ENCODE measurements at regions of chr3 and their contacts with region 1.

Region 1: GRCh38 chr3:98602078-98602678 is 8.8 kb upstream of the CPOX start:
- DNase-seq: peak; percentile 53
- ATAC-seq: peak; percentile 87
- H3K4me3 ChIP-seq: no peak overlapping the region
- H3K27ac ChIP-seq: no peak overlapping the region
- H3K4me1 ChIP-seq: peaks cover 42% of the 10 kb centered on the region
- H3K27me3 ChIP-seq: no peaks in the 10 kb centered on the region
- CTCF ChIP-seq: peak; percentile 83
- EP300 ChIP-seq: no peak
- POLR2A ChIP-seq: no peak
- RAD21 ChIP-seq: peak; percentile 68

Region 2: GRCh38 chr3:98563661-98564281 is 38.4 kb before region 1 on chr3:
- CTCF ChIA-PET with region 1: no interaction called
- POLR2A ChIA-PET with region 1: no interaction called
- in situ Hi-C with region 1: no loop called
- intact Hi-C with region 1: no loop called
- DNase-seq: no peak
- ATAC-seq: no peak
- H3K4me3 ChIP-seq: no peak overlapping the region
- H3K27ac ChIP-seq: no peak overlapping the region
- H3K4me1 ChIP-seq: no peaks in the 10 kb centered on the region
- H3K27me3 ChIP-seq: no peaks in the 10 kb centered on the region; a peak in 1 of 5 replicates
- CTCF ChIP-seq: no peak
- EP300 ChIP-seq: no peak
- POLR2A ChIP-seq: no peak
- RAD21 ChIP-seq: no peak

Region 3: DNA sequence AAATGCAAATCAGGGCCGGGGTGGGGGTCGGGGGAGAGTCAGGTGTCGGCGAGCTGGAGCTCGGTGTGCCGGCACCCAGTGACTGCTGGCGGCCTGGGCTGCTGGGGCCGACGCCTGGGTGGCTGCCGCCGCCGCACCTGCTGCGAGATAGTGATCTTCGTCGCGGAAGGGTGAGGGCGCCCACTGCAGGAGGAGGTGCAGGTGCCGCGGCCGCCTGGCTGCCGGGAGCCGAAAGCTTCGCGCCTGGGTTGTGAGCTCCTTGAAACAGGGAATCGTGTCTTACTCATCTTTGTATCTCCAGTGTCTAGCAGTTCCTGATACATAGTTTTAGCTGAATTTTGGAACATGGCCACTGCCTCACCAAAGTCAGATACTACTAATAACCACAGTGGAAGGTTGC is 55.3 kb after region 1 on chr3:
- CTCF ChIA-PET with region 1: no interaction called
- POLR2A ChIA-PET with region 1: no interaction called
- in situ Hi-C with region 1: no loop called
- intact Hi-C with region 1: loop called (anchors 1 kb)
- DNase-seq: no peak
- ATAC-seq: peak; percentile 93
- H3K4me3 ChIP-seq: no peak overlapping the region
- H3K27ac ChIP-seq: no peak overlapping the region
- H3K4me1 ChIP-seq: no peaks in the 10 kb centered on the region
- H3K27me3 ChIP-seq: peaks cover 0 to 8% of the 10 kb centered on the region in 2 experiments; a peak in 2 of 5 replicates
- CTCF ChIP-seq: peak; percentile 75
- EP300 ChIP-seq: no peak
- POLR2A ChIP-seq: no peak
- RAD21 ChIP-seq: 0 out of 2 replicates have a peak, but pooled peaks have one; percentile 19

Region 4: GRCh38 chr3:98732286-98733052 is 130.3 kb after region 1 on chr3:
- CTCF ChIA-PET with region 1: no interaction called
- POLR2A ChIA-PET with region 1: interaction called, 3 read pairs
- in situ Hi-C with region 1: no loop called
- intact Hi-C with region 1: loop called (anchors 2 kb)
- DNase-seq: peak; percentile 82
- ATAC-seq: peak; percentile 85
- H3K4me3 ChIP-seq: peak overlapping the region; percentile 87 to 94 (median 92)
- H3K27ac ChIP-seq: peak overlapping the region; percentile 94
- H3K4me1 ChIP-seq: peaks cover 53% of the 10 kb centered on the region
- H3K27me3 ChIP-seq: no peaks in the 10 kb centered on the region; a peak in 1 of 5 replicates
- CTCF ChIP-seq: 0 out of 2 replicates have a peak, but pooled peaks have one; percentile 16
- EP300 ChIP-seq: peak in 1 of 2 experiments; percentile 31; a peak in 1 of 4 replicates
- POLR2A ChIP-seq: peak; percentile 62 to 70; a peak in 3 of 4 replicates
- RAD21 ChIP-seq: no peak

Region 5: DNA sequence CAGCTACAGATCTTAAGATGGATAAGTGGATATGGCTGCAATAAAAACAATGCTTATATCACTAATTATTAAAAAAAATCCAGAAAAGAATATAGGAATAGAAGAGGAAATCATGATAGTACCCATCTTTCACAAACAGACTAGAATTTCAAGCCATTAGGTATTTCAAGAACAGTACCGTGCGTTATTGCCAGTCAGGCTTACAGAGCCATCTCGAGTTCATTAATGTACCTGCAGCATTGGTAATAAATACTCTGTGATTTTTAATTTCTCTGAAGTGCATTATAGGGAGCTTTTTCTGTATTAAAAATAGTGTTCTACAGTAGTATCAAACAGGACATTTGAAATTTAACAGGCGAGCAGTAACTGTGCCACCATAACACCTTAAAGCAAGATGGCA is 196.6 kb after region 1 on chr3:
- CTCF ChIA-PET with region 1: interaction called, 7 read pairs
- POLR2A ChIA-PET with region 1: no interaction called
- in situ Hi-C with region 1: no loop called
- intact Hi-C with region 1: loop called (anchors 1 kb)
- DNase-seq: no peak
- ATAC-seq: no peak
- H3K4me3 ChIP-seq: no peak overlapping the region
- H3K27ac ChIP-seq: no peak overlapping the region
- H3K4me1 ChIP-seq: peaks cover 12% of the 10 kb centered on the region
- H3K27me3 ChIP-seq: no peaks in the 10 kb centered on the region
- CTCF ChIP-seq: no peak
- EP300 ChIP-seq: no peak
- POLR2A ChIP-seq: no peak
- RAD21 ChIP-seq: no peak

Region 6: DNA sequence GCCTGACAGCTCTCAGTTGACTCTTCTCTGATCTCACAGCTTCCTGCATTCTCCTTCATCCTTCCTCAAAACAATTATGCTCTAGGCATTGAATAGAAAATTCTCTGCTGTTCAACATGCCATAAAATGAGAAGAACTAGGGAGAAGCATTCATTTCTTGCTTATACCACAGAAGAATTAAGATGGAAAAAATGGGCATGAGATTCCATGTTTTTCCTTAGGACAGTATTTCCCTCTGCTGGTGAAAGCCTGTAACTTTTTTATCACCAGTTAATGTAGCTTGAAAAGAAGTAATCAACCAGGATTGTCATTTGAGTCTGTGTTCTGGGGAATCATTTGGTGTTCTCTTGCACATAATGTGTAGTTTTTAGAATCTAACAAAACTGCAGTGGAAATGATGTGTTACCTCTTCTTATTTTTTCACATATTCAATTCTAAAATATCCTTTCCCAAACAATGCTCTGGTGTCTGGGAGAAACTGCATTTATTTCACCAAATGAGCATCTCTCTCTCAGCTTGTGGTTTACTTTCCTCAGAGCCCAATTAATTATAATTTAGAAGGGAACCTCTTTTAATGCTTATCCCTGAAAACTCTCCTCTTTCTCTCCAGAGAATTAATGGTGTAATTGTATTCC is 392.1 kb after region 1 on chr3:
- CTCF ChIA-PET with region 1: no interaction called
- POLR2A ChIA-PET with region 1: no interaction called
- in situ Hi-C with region 1: loop called (anchors 10 kb)
- intact Hi-C with region 1: loop called (anchors 2 kb)
- DNase-seq: peak; percentile 34
- ATAC-seq: peak; percentile 57
- H3K4me3 ChIP-seq: no peak overlapping the region
- H3K27ac ChIP-seq: no peak overlapping the region
- H3K4me1 ChIP-seq: no peaks in the 10 kb centered on the region
- H3K27me3 ChIP-seq: no peaks in the 10 kb centered on the region; a peak in 1 of 5 replicates
- CTCF ChIP-seq: peak; percentile 62
- EP300 ChIP-seq: no peak
- POLR2A ChIP-seq: no peak
- RAD21 ChIP-seq: peak; percentile 29; the same call in 1 of the 2 replicates

Measured in HepG2 (cell line).